Activated CD8-positive, alpha-beta T cell treated with anti-CD3 and anti-CD28 coated beads for 36 hours (primary cell): ENCODE measurements at regions of chr15 and their contacts with region 1.

Region 1: GRCh38 chr15:94582369-94582768 is 351.0 kb downstream of the MCTP2 start:
- DNase-seq: peak; percentile 54
- ATAC-seq: peak; percentile 61
- H3K4me3 Mint-ChIP-seq: no peak overlapping the region
- H3K27ac Mint-ChIP-seq: no peak overlapping the region
- H3K4me1 Mint-ChIP-seq: peaks cover 26% of the 10 kb centered on the region
- H3K27me3 Mint-ChIP-seq: peaks cover 73% of the 10 kb centered on the region
- CTCF ChIP-seq: peak; percentile 55

Region 2: DNA sequence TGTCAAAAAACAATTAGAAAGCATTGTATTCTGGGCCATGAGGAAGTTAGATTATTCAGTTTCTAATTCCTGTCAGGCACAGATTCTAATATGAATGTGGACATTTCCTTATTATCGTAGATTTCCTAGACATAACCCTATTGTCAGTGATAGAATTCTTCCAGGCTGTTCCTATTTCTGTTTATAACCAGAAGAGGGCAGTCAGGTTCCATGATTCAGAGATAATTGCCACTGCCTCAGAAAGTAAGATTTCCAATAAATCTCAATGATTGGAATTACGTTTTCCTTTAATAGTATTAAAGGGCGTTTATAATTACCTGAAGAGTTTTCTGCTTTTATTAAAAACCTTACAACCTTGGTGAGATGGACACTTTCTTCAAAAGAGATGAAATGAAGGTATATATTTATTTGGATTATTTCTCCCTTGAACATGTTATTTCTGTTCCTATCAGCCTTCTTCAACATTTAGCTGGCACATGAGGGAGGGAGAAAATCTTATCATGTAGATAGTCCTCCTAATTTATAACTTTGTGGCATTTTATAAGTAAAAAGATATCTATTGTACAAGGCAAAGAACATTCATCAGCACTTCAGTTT is 88.2 kb after region 1 on chr15:
- CTCF ChIA-PET with region 1: interaction called, 11 read pairs
- POLR2A ChIA-PET with region 1: no interaction called
- intact Hi-C with region 1: no loop called
- DNase-seq: no peak
- ATAC-seq: no peak
- H3K4me3 Mint-ChIP-seq: no peak overlapping the region
- H3K27ac Mint-ChIP-seq: no peak overlapping the region
- H3K4me1 Mint-ChIP-seq: no peaks in the 10 kb centered on the region
- H3K27me3 Mint-ChIP-seq: peaks cover 13% of the 10 kb centered on the region
- CTCF ChIP-seq: peak; percentile 73

Region 3: DNA sequence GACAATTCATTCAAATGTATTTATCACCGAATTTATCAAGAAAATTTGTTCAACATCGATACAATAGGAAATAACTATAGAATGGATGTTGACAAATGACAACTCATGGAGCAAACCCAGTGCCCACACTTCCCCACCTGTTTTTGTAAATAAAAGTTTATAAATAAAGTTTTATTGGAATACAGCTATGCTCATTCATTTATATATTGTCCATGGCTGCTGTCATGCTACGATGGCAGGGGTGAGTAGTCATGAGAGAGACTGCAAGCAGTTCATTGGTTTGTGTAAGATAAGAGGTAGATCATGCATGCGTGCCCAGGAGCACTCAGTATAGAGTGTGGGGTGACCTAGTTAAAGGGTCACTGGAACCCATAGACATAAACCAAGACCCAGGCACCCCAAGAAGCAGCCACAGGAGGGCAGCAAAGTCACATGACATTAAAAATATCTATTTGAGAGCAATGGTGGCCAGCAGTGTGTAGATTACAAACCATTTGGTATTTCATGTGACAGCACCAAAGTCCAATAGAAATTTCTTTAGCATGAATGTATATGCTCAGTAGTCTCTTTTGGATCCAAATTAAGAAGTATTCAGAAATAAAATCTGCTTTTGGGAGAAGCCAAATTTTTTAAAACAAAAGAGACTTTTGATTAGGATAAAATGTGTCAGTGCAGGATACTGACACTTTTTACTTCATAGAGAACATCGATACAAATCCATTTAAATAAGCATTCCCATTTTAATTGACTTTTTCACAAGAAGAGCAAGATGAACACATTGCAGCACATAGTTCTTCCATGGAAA is 443.8 kb after region 1 on chr15:
- CTCF ChIA-PET with region 1: no interaction called
- POLR2A ChIA-PET with region 1: no interaction called
- intact Hi-C with region 1: loop called (anchors 10 kb)
- DNase-seq: peak; percentile 55
- ATAC-seq: no peak
- H3K4me3 Mint-ChIP-seq: no peak overlapping the region
- H3K27ac Mint-ChIP-seq: no peak overlapping the region
- H3K4me1 Mint-ChIP-seq: no peaks in the 10 kb centered on the region
- H3K27me3 Mint-ChIP-seq: peaks cover 1% of the 10 kb centered on the region
- CTCF ChIP-seq: peak; percentile 18

Region 4: GRCh38 chr15:95284933-95285421 is 702.6 kb after region 1 on chr15:
- CTCF ChIA-PET with region 1: interaction called, 3 read pairs
- POLR2A ChIA-PET with region 1: no interaction called
- intact Hi-C with region 1: loop called (anchors 10 kb)
- DNase-seq: peak; percentile 37
- ATAC-seq: peak; percentile 61
- H3K4me3 Mint-ChIP-seq: no peak overlapping the region
- H3K27ac Mint-ChIP-seq: no peak overlapping the region
- H3K4me1 Mint-ChIP-seq: peaks cover 10% of the 10 kb centered on the region
- H3K27me3 Mint-ChIP-seq: peaks cover 25% of the 10 kb centered on the region
- CTCF ChIP-seq: no peak